CD14-positive monocyte (primary cell): ENCODE measurements at regions of chr1 and their contacts with region 1.

Region 1: DNA sequence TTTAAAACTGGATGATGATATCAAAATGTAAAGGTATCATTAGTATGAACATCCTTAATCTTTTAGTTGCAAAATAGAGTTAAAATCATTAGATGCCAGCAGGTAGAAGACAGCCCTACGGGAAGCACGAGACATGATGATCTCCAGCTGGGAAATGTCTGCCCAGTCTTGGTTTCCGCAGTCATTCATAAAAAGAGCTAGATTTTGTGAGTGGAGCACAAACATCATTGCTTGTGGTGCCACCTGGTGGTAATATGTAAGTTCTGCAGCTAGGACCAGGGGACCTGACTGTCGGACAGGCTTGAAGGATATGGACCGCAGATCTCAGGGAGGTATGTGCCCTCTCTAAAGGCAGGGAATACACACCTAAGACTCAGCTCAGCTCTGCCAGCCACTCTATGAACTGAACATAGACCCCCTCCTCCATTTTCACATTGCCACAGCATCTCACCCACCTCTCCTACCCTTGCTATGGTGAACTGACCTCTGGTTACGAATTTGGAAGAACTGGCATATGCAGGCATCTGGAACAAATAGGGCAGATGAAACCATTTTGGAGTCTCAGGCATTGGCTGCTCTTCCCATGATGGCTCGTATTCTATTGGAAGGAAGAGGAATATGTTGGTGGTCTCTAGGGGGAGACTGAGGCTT is 9.2 kb downstream of the FCMR start:
- DNase-seq: peak; percentile 65 to 84 (median 75)
- H3K4me3 ChIP-seq: no peak overlapping the region
- H3K4me3 Mint-ChIP-seq: no peak overlapping the region
- H3K27ac ChIP-seq: no peak overlapping the region
- H3K27ac Mint-ChIP-seq: peak overlapping the region in 2 of 7 donors; percentile 27 to 60
- H3K4me1 ChIP-seq: peaks cover 10 to 11% of the 10 kb centered on the region in 2 donors
- H3K4me1 Mint-ChIP-seq: peaks cover 24% of the 10 kb centered on the region
- H3K27me3 ChIP-seq: peaks cover 30 to 39% of the 10 kb centered on the region in 2 donors
- H3K27me3 Mint-ChIP-seq: peaks cover 35 to 52% (median 40%) of the 10 kb centered on the region in 3 donors
- CTCF ChIP-seq: peak; percentile 88

Region 2: GRCh38 chr1:206635080-206635977 is 277.2 kb before region 1 on chr1 and contains the start of gene DYRK3:
- intact Hi-C with region 1: loop called (anchors 10 kb)
- DNase-seq: peak; percentile 86 to 90 (median 87)
- H3K4me3 ChIP-seq: peak within 1 kb of the TSS; percentile 38 to 79 (median 72)
- H3K4me3 Mint-ChIP-seq: peak within 1 kb of the TSS; percentile 75 to 90
- H3K27ac ChIP-seq: no peak within 1 kb of the TSS
- H3K27ac Mint-ChIP-seq: peak within 1 kb of the TSS in 6 of 7 donors; percentile 18 to 89 (median 71)
- H3K4me1 ChIP-seq: peaks cover 16 to 22% of the 10 kb centered on the region in 2 donors
- H3K4me1 Mint-ChIP-seq: peaks cover 17% of the 10 kb centered on the region
- H3K27me3 ChIP-seq: peaks cover 5 to 15% of the 10 kb centered on the region in 2 donors
- H3K27me3 Mint-ChIP-seq: peaks cover 11 to 34% (median 26%) of the 10 kb centered on the region in 3 donors
- CTCF ChIP-seq: no peak
- polyA plus RNA-seq, gene DYRK3: 0.13 TPM in 1 of 3 donors, not detected in the others

Region 3: DNA sequence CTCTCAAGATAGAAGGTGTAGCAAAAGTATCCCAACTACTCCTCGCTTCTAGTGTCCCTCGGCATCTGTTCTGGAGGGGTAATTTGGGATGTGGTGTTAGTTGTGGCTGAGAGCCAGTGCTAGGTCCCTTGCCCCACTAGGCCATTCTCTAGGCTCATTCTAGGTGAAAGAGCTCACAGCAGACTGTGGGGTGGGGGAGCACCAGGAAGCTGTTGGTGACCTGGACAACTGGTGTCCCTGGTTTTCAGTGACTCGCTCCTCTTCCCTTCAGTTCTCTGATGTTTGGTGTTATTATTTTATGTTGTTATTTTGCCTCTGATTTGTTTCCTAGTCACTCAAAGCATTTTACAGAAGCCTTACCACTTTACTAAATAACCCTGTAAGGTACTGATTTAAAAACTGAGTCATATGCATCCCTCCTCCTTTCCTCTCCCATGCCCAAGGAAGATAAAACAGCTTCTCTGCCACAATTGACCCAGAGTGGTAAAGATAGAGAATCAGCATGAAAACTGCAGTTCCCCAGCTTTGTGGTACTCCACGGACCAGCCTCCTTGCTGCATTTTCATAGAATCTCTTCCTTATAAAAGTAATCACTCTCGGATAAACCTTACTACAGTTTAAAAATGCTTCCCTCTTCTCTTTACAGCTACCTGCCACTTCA is 263.2 kb before region 1 on chr1:
- intact Hi-C with region 1: no loop called
- DNase-seq: no peak
- H3K4me3 ChIP-seq: no peak overlapping the region
- H3K4me3 Mint-ChIP-seq: no peak overlapping the region
- H3K27ac ChIP-seq: no peak overlapping the region
- H3K27ac Mint-ChIP-seq: no peak overlapping the region
- H3K4me1 ChIP-seq: peaks cover 3 to 10% of the 10 kb centered on the region in 2 donors
- H3K4me1 Mint-ChIP-seq: peaks cover 9% of the 10 kb centered on the region
- H3K27me3 ChIP-seq: no peaks in the 10 kb centered on the region
- H3K27me3 Mint-ChIP-seq: peaks cover 0 to 4% (median 0%) of the 10 kb centered on the region in 3 donors
- CTCF ChIP-seq: no peak

Region 4: DNA sequence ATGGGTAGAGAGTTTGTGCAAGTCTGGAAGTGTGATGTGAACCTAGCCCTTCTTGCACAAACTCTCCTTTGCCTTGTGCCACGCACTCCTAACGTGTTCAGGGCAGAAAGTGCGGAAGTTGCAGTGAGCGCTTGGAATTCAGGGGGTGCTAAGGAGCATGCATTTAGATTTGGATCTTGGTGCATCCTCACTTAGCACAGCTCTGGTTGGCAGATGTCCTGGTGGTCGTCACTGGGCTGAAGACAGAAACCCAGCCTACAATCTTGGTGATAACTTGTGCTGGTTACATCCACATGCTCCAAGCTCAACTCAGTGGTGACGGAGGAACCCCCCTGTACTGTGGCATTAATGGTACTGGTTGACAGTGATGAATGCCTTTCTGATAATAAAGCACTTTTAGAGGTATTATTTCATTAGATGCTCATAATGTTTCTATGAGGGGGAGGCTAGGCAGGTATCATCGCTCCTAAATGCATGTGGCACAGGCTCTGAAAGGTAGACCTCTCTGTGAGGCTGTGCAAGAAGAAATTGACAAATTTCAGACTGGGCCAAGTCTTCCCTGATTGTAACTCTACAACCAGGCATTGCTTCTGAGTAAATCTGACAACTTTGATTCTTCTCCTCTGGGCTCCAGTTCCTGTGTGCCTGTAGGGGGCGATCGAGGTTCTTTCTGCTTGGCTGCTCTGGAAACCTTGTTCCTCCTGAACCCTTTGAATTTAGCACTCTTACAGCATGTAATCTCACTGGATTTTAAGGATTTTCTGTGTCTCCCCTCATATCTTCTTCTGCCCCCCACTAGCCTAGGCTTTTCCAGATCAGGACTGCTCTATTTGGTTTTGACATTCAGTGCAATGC is 187.2 kb before region 1 on chr1:
- intact Hi-C with region 1: loop called in 1 of 2 experiments (anchors 5 kb)
- DNase-seq: peak; percentile 44 to 58 (median 50)
- H3K4me3 ChIP-seq: no peak overlapping the region
- H3K4me3 Mint-ChIP-seq: no peak overlapping the region
- H3K27ac ChIP-seq: no peak overlapping the region
- H3K27ac Mint-ChIP-seq: peak overlapping the region in 4 of 7 donors; percentile 12 to 67 (median 49)
- H3K4me1 ChIP-seq: peaks cover 32 to 54% of the 10 kb centered on the region in 2 donors
- H3K4me1 Mint-ChIP-seq: peaks cover 74% of the 10 kb centered on the region
- H3K27me3 ChIP-seq: no peaks in the 10 kb centered on the region
- H3K27me3 Mint-ChIP-seq: peaks cover 0 to 5% (median 4%) of the 10 kb centered on the region in 3 donors
- CTCF ChIP-seq: no peak

Region 5: DNA sequence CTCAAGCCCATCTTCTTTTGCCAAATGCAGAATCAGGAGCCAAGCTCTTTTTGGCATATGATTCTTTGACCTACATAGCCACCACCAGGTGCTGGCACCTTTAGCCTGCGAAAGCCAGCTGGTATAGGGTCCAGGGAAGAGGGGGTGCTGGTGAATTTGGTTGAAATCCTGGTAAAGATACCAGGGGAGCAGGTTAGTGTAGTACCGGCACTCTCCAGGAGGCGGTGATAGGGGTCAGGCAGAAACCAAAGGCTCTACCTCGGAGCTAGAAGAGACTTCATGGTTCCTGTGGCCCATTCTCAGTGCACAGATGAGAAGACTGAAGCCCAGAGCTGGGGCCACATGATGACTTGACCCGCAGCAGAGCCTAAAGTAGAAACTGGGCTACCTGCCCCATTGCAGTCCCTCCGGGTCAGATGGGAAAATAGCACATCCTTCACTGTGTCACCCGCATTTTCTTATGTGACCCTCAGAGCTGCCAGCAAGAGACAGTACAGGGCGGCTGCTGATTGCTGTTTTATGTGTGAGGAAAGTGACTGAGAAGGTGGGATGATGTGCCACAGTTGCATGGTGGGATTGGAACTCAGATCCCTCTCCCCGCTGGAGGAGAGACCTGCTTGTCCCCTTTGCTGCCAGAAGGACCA is 177.9 kb before region 1 on chr1:
- intact Hi-C with region 1: loop called (anchors 2 to 5 kb)
- DNase-seq: peak; percentile 45 to 59 (median 55)
- H3K4me3 ChIP-seq: peak overlapping the region in 1 of 3 experiments; percentile 18
- H3K4me3 Mint-ChIP-seq: no peak overlapping the region
- H3K27ac ChIP-seq: peak overlapping the region in 1 of 2 donors; percentile 49
- H3K27ac Mint-ChIP-seq: peak overlapping the region; percentile 14 to 81 (median 31)
- H3K4me1 ChIP-seq: peaks cover 38 to 47% of the 10 kb centered on the region in 2 donors
- H3K4me1 Mint-ChIP-seq: peaks cover 55% of the 10 kb centered on the region
- H3K27me3 ChIP-seq: no peaks in the 10 kb centered on the region
- H3K27me3 Mint-ChIP-seq: peaks cover 0 to 1% (median 0%) of the 10 kb centered on the region in 3 donors
- CTCF ChIP-seq: peak; percentile 92

Region 6: GRCh38 chr1:206766251-206766856 is 146.2 kb before region 1 on chr1:
- intact Hi-C with region 1: no loop called
- DNase-seq: peak; percentile 88 to 97 (median 95)
- H3K4me3 ChIP-seq: peak overlapping the region in 1 of 3 experiments; percentile 22
- H3K4me3 Mint-ChIP-seq: peak overlapping the region; percentile 34 to 67
- H3K27ac ChIP-seq: peak overlapping the region in 1 of 2 donors; percentile 25
- H3K27ac Mint-ChIP-seq: peak overlapping the region; percentile 39 to 91 (median 81)
- H3K4me1 ChIP-seq: peaks cover 45 to 57% of the 10 kb centered on the region in 2 donors
- H3K4me1 Mint-ChIP-seq: peaks cover 54% of the 10 kb centered on the region
- H3K27me3 ChIP-seq: no peaks in the 10 kb centered on the region
- H3K27me3 Mint-ChIP-seq: peaks cover under 1 to 21% (median 10%) of the 10 kb centered on the region in 3 donors
- CTCF ChIP-seq: no peak

Region 7: GRCh38 chr1:206865013-206865671 is 47.4 kb before region 1 on chr1 and contains the start of gene IL20:
- intact Hi-C with region 1: loop called (anchors 5 kb)
- DNase-seq: peak; percentile 65 to 80 (median 74)
- H3K4me3 ChIP-seq: no peak within 1 kb of the TSS
- H3K4me3 Mint-ChIP-seq: peak within 1 kb of the TSS in 1 of 2 donors; percentile 3
- H3K27ac ChIP-seq: no peak within 1 kb of the TSS
- H3K27ac Mint-ChIP-seq: no peak within 1 kb of the TSS
- H3K4me1 ChIP-seq: no peaks in the 10 kb centered on the region
- H3K4me1 Mint-ChIP-seq: peaks cover 5% of the 10 kb centered on the region
- H3K27me3 ChIP-seq: peaks cover 10 to 13% of the 10 kb centered on the region in 2 donors
- H3K27me3 Mint-ChIP-seq: peaks cover 15 to 26% (median 22%) of the 10 kb centered on the region in 3 donors
- CTCF ChIP-seq: peak; percentile 92
- polyA plus RNA-seq, gene IL20: not detected

Region 8: GRCh38 chr1:206878456-206878855 is 34.1 kb before region 1 on chr1:
- intact Hi-C with region 1: no loop called
- DNase-seq: no peak
- H3K4me3 ChIP-seq: no peak overlapping the region
- H3K4me3 Mint-ChIP-seq: no peak overlapping the region
- H3K27ac ChIP-seq: no peak overlapping the region
- H3K27ac Mint-ChIP-seq: no peak overlapping the region
- H3K4me1 ChIP-seq: no peaks in the 10 kb centered on the region
- H3K4me1 Mint-ChIP-seq: no peaks in the 10 kb centered on the region
- H3K27me3 ChIP-seq: no peaks in the 10 kb centered on the region
- H3K27me3 Mint-ChIP-seq: peaks cover 1 to 2% (median 2%) of the 10 kb centered on the region in 3 donors
- CTCF ChIP-seq: no peak

Region 9: DNA sequence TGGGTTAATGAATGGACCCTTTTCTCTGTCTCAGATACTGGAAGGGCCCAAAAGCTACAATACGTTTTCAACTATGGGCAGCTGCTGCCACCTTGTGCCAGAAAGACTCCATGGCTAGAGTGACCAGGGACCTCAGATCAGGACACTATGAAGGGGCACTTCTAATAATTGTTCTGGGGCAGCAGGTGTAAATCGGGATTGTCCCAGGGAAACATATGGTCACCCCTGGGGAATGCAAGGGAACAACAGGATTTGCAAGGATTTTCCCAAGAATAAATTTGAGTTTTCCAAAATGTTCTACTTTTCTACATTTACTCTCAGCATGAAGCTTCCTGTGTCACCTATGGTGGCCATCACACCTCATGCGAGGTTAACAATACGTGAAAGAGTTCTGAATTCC is 69.6 kb after region 1 on chr1:
- intact Hi-C with region 1: loop called in 1 of 2 experiments (anchors 10 kb)
- DNase-seq: peak; percentile 42 to 64 (median 62)
- H3K4me3 ChIP-seq: no peak overlapping the region
- H3K4me3 Mint-ChIP-seq: no peak overlapping the region
- H3K27ac ChIP-seq: no peak overlapping the region
- H3K27ac Mint-ChIP-seq: no peak overlapping the region
- H3K4me1 ChIP-seq: no peaks in the 10 kb centered on the region
- H3K4me1 Mint-ChIP-seq: no peaks in the 10 kb centered on the region
- H3K27me3 ChIP-seq: peaks cover 0 to 4% of the 10 kb centered on the region in 2 donors
- H3K27me3 Mint-ChIP-seq: peaks cover 6 to 14% (median 9%) of the 10 kb centered on the region in 3 donors
- CTCF ChIP-seq: peak; percentile 87